ENCODE measurements at regions of chr1 and their contacts with region 1.

Region 1: DNA sequence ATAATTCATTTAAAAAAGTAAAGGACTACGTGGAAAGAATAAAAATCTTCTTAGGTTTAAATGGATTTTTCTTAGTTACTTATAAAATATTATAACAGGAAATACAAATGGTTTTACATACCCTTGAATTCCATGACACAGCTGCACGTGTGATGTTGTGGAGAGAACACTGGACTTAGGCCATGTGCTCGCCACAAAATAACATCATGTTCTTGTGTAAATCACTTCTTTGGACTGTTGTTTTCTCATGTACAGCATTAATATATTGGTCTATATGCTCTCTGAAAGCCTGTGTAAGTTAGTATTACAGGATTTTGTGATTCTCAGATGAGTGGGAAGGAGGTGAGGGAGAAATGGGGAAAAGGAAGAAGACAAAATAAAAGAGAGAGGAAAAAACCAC is 228.2 kb downstream of the DNM3 start:
- DNase-seq: no peak
- ATAC-seq: no peak
- H3K4me3 ChIP-seq: no peak overlapping the region
- H3K27ac ChIP-seq: peak overlapping the region in 1 of 12 donors; percentile 14
- H3K4me1 ChIP-seq: no peaks in the 10 kb centered on the region
- H3K27me3 ChIP-seq: no peaks in the 10 kb centered on the region
- CTCF ChIP-seq: no peak
- POLR2A ChIP-seq: no peak

Region 2: GRCh38 chr1:172112576-172112975 is 43.0 kb after region 1 on chr1:
- intact Hi-C with region 1: loop called in 1 of 10 experiments (anchors 5 kb)
- DNase-seq: no peak
- ATAC-seq: no peak
- H3K4me3 ChIP-seq: no peak overlapping the region
- H3K27ac ChIP-seq: no peak overlapping the region
- H3K4me1 ChIP-seq: no peaks in the 10 kb centered on the region
- H3K27me3 ChIP-seq: no peaks in the 10 kb centered on the region
- CTCF ChIP-seq: no peak
- POLR2A ChIP-seq: no peak

Measured in heart left ventricle (tissue), 16 donors.